ENCODE measurements at regions of chr22 and their contacts with region 1.

Region 1: GRCh38 chr22:20205964-20206708 is 55.3 kb upstream of the CCDC188 start:
- DNase-seq: peak; percentile 62
- H3K4me3 ChIP-seq: peak overlapping the region; percentile 53 to 63 (median 60)
- H3K27ac ChIP-seq: peak overlapping the region; percentile 25
- H3K4me1 ChIP-seq: peaks cover 35% of the 10 kb centered on the region
- H3K27me3 ChIP-seq: no peaks in the 10 kb centered on the region
- CTCF ChIP-seq: peak in 1 of 2 donors; percentile 20

Region 2: DNA sequence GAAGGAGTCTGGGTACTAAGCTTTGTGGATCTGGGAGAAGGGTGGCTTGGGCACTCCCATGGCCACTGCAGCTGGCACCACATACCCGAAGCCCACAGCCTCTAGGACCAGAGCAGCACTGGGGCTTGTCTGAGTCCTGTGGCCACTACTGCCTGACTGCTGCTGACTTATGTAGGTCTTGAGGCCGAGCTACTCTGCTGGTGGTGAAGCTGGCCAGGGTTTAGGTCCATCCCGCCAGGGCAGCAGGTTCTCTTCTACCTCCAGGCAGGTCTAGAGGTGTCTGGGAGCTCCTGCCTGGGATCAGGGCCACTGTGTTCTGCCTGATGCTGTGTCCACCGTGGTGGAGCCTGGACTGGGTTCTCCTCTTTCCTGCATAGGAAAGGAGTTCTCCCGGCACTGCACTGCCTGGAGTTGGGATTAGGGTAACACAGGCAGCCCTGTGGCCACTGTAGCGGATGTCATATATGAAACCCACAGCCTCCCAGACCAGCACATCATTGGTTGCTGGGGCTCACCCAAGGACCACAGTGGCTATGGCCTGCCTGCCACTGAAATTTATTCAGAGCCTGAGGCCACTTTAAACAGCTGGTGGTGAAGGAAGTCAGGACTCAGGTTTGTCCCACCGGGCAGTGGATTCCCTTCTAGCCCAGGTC is 457.9 kb after region 1 on chr22:
- CTCF ChIA-PET with region 1: interaction called, 10 read pairs
- dilution Hi-C with region 1: no loop called
- in situ Hi-C with region 1: no loop called
- intact Hi-C with region 1: no loop called
- DNase-seq: no peak
- H3K4me3 ChIP-seq: no peak overlapping the region
- H3K27ac ChIP-seq: no peak overlapping the region
- H3K4me1 ChIP-seq: peaks cover 6% of the 10 kb centered on the region
- H3K27me3 ChIP-seq: peaks cover 3% of the 10 kb centered on the region
- CTCF ChIP-seq: no peak

Measured in mammary epithelial cell (primary cell).